ENCODE measurements at regions of chr7 and their contacts with region 1.

Region 1: GRCh38 chr7:29748286-29749108 is 57.8 kb upstream of the WIPF3 start:
- DNase-seq: peak; percentile 51
- ATAC-seq: peak; percentile 95
- H3K4me3 ChIP-seq: no peak overlapping the region
- H3K27ac ChIP-seq: no peak overlapping the region
- H3K4me1 ChIP-seq: peaks cover 3% of the 10 kb centered on the region
- H3K27me3 ChIP-seq: peaks cover 3% of the 10 kb centered on the region; the same call in 1 of the 2 replicates
- CTCF ChIP-seq: peak; percentile 87; the same call in 1 of the 2 replicates

Region 2: GRCh38 chr7:29649028-29649716 is 99.3 kb before region 1 on chr7:
- CTCF ChIA-PET with region 1: no interaction called
- POLR2A ChIA-PET with region 1: interaction called, 3 read pairs
- in situ Hi-C with region 1: no loop called
- intact Hi-C with region 1: loop called (anchors 1 kb)
- DNase-seq: no peak
- ATAC-seq: no peak
- H3K4me3 ChIP-seq: no peak overlapping the region
- H3K27ac ChIP-seq: no peak overlapping the region
- H3K4me1 ChIP-seq: no peaks in the 10 kb centered on the region
- H3K27me3 ChIP-seq: no peaks in the 10 kb centered on the region
- CTCF ChIP-seq: no peak

Region 3: GRCh38 chr7:29734246-29734731 is 14.2 kb before region 1 on chr7:
- CTCF ChIA-PET with region 1: no interaction called
- POLR2A ChIA-PET with region 1: no interaction called
- in situ Hi-C with region 1: no loop called
- intact Hi-C with region 1: no loop called
- DNase-seq: no peak
- ATAC-seq: no peak
- H3K4me3 ChIP-seq: no peak overlapping the region
- H3K27ac ChIP-seq: no peak overlapping the region
- H3K4me1 ChIP-seq: no peaks in the 10 kb centered on the region
- H3K27me3 ChIP-seq: 0 out of 2 replicates have a peak, but pooled peaks cover 2% of the 10 kb centered on the region
- CTCF ChIP-seq: no peak

Region 4: DNA sequence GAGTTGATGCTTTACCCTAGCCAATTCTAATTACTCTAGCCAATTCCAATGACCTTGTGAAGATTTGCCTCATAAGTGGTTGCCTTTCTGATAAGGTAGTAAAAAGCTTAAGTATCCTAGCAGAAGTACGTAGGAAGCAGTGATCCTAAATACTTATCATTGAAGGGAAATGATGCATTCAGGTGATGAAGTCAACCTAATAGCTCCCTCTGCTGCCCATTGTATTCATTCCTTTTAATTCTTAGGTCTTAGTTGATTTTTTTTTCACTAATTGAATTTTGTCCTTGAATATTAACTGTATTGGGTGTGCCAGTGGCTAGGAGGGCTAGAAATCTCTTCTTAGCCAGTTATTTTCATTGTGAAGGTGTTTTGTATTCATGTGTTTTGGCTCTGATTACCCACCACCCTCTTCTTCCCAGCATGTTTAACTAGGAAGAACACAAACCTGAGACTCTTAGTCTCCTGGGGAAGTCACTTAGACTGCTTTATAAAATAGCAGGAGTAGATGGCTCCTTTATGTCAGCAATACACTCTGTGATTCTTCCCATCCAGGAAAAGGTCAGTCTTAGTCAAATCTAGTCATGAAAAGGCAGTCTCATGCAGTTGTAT is 326.0 kb after region 1 on chr7:
- CTCF ChIA-PET with region 1: no interaction called
- POLR2A ChIA-PET with region 1: no interaction called
- in situ Hi-C with region 1: no loop called
- intact Hi-C with region 1: loop called (anchors 5 kb)
- DNase-seq: peak; percentile 22
- ATAC-seq: peak; percentile 74
- H3K4me3 ChIP-seq: no peak overlapping the region
- H3K27ac ChIP-seq: no peak overlapping the region
- H3K4me1 ChIP-seq: no peaks in the 10 kb centered on the region
- H3K27me3 ChIP-seq: no peaks in the 10 kb centered on the region
- CTCF ChIP-seq: peak; percentile 77; the same call in 1 of the 2 replicates

Measured in Panc1 (cell line).